PC-9 (cell line): ENCODE measurements at regions of chr1 and their contacts with region 1.

Region 1: GRCh38 chr1:42462828-42463763 is at the start of gene CCDC30:
- DNase-seq: peak; percentile 99
- H3K4me3 ChIP-seq: peak within 1 kb of the TSS; percentile 73
- H3K27ac ChIP-seq: peak within 1 kb of the TSS; percentile 36; the same call in 1 of the 2 replicates
- H3K4me1 ChIP-seq: peaks cover 20% of the 10 kb centered on the region
- H3K27me3 ChIP-seq: no peaks in the 10 kb centered on the region
- CTCF ChIP-seq: no peak
- total RNA-seq, gene CCDC30: 6.9 and 10.2 TPM in 2 replicates

Region 2: GRCh38 chr1:41343790-41344699 is 1119.1 kb before region 1 on chr1:
- CTCF ChIA-PET with region 1: no interaction called
- POLR2A ChIA-PET with region 1: interaction called, 10 read pairs
- intact Hi-C with region 1: no loop called
- DNase-seq: peak in 1 of 2 experiments; percentile 35
- H3K4me3 ChIP-seq: no peak overlapping the region
- H3K27ac ChIP-seq: no peak overlapping the region
- H3K4me1 ChIP-seq: peaks cover 64% of the 10 kb centered on the region
- H3K27me3 ChIP-seq: no peaks in the 10 kb centered on the region
- CTCF ChIP-seq: no peak

Region 3: GRCh38 chr1:41423511-41424221 is 1039.4 kb before region 1 on chr1:
- CTCF ChIA-PET with region 1: no interaction called
- POLR2A ChIA-PET with region 1: interaction called, 12 read pairs
- intact Hi-C with region 1: no loop called
- DNase-seq: peak; percentile 45 to 70
- H3K4me3 ChIP-seq: peak overlapping the region; percentile 43; the same call in 1 of the 2 replicates
- H3K27ac ChIP-seq: no peak overlapping the region
- H3K4me1 ChIP-seq: peaks cover 24% of the 10 kb centered on the region
- H3K27me3 ChIP-seq: no peaks in the 10 kb centered on the region
- CTCF ChIP-seq: peak; percentile 55; the same call in 1 of the 2 replicates

Region 4: DNA sequence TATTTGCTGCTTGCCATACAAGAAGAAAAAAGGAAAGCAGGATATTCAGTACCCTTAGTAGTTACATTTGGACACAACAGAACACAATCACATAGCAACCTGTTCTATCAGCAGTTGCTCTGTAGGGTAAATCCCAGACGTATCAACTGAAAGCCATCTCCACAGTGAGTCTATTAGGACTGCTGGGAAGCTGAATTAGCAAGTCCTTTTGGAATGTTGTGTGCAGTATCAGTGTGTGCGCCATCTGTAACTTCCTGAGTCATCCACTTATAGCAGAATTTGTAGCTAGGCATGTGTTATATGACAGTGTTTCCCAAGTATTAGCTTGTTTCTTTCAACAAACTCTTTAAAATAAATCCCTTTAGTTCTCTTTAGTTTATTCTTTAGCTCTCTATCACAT is 21.3 kb after region 1 on chr1:
- CTCF ChIA-PET with region 1: no interaction called
- POLR2A ChIA-PET with region 1: interaction called, 3 read pairs
- intact Hi-C with region 1: loop called (anchors 1 kb)
- DNase-seq: peak; percentile 46 to 63
- H3K4me3 ChIP-seq: no peak overlapping the region
- H3K27ac ChIP-seq: 0 out of 2 replicates have a peak overlapping the region, but pooled peaks have one; percentile 34
- H3K4me1 ChIP-seq: peaks cover 6% of the 10 kb centered on the region; the same call in 1 of the 2 replicates
- H3K27me3 ChIP-seq: no peaks in the 10 kb centered on the region
- CTCF ChIP-seq: no peak